K562 (cell line): ENCODE measurements at regions of chr16 and their contacts with region 1.

Region 1: GRCh38 chr16:23556881-23557778 is at the starts of genes EARS2 and UBFD1:
- DNase-seq: peak; percentile 95 to 99 (median 96)
- ATAC-seq: peak; percentile 96
- H3K4me3 ChIP-seq: peak within 1 kb of the TSS; percentile 97
- H3K27ac ChIP-seq: peak within 1 kb of the TSS; percentile 92
- H3K4me1 ChIP-seq: peaks cover 8 to 12% of the 10 kb centered on the region in 2 experiments; a peak in 3 of 5 replicates
- H3K27me3 ChIP-seq: no peaks in the 10 kb centered on the region
- CTCF ChIP-seq: peak; percentile 96 to 98 (median 98)
- EP300 ChIP-seq: peak; percentile 36; the same call in 1 of the 2 replicates
- POLR2A ChIP-seq: peak; percentile 88
- RAD21 ChIP-seq: peak; percentile 62 to 68
- polyA plus RNA-seq, gene EARS2: 17.6 to 20.4 TPM
- polyA plus RNA-seq, gene UBFD1: 10.7 to 11.0 TPM

Region 2: GRCh38 chr16:23435500-23435899 is 121.6 kb before region 1 on chr16:
- CTCF ChIA-PET with region 1: no interaction called
- POLR2A ChIA-PET with region 1: no interaction called
- in situ Hi-C with region 1: no loop called
- intact Hi-C with region 1: loop called (anchors 10 kb)
- DNase-seq: peak; percentile 65 to 80 (median 78)
- ATAC-seq: peak; percentile 97
- H3K4me3 ChIP-seq: no peak overlapping the region
- H3K27ac ChIP-seq: no peak overlapping the region
- H3K4me1 ChIP-seq: peaks cover 10 to 18% of the 10 kb centered on the region in 2 experiments; a peak in 4 of 5 replicates
- H3K27me3 ChIP-seq: no peaks in the 10 kb centered on the region
- CTCF ChIP-seq: peak; percentile 94 to 99 (median 95)
- EP300 ChIP-seq: no peak
- POLR2A ChIP-seq: no peak
- RAD21 ChIP-seq: peak in 1 of 2 experiments; percentile 58; a peak in 2 of 4 replicates

Region 3: DNA sequence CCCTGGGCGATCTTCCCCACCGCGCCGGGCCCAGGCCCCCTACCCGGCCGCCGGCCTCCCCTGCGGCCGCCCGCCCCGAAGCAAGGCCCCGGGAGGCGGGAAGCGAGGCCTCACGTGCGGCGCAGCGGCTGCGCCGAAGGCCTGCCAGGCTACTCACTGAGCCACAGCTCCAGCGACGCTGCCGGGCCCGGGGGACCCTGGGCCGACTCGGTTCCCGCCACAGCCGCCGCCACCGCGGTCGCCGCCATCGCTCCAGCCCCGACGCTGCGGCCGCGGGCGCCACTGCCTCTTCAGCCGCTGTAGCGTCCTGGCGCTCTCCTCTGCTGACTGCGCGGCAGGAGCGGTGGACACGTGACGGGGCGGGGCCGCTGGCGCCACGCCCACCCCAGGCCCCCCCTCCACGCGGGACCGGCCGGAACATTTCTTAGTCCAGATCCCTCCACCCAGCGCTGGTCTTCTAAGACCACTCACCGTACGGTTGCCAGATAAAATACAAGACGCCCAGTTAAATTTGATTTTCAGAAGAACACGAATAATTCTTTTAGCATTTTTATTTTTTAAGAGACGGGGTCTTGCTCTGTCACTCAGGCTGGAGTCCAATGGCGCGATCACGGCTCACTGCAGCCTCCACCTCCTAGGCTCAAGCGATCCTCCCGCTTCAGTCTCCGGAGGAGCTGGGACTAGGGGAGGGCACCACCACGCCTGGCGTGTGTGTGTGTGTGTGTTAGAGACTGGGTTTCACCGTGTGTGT is 46.8 kb before region 1 on chr16 and contains the start of gene GGA2:
- CTCF ChIA-PET with region 1: no interaction called
- POLR2A ChIA-PET with region 1: interaction called, 3 read pairs
- in situ Hi-C with region 1: no loop called
- intact Hi-C with region 1: loop called (anchors 2 kb)
- DNase-seq: peak; percentile 88 to 91 (median 90)
- ATAC-seq: peak; percentile 89
- H3K4me3 ChIP-seq: peak within 1 kb of the TSS; percentile 62
- H3K27ac ChIP-seq: peak within 1 kb of the TSS; percentile 83
- H3K4me1 ChIP-seq: peaks cover 34 to 41% of the 10 kb centered on the region in 2 experiments; a peak in 4 of 5 replicates
- H3K27me3 ChIP-seq: no peaks in the 10 kb centered on the region
- CTCF ChIP-seq: no peak
- EP300 ChIP-seq: no peak
- POLR2A ChIP-seq: peak; percentile 71
- RAD21 ChIP-seq: no peak
- polyA plus RNA-seq, gene GGA2: 11.9 to 15.7 TPM

Region 4: DNA sequence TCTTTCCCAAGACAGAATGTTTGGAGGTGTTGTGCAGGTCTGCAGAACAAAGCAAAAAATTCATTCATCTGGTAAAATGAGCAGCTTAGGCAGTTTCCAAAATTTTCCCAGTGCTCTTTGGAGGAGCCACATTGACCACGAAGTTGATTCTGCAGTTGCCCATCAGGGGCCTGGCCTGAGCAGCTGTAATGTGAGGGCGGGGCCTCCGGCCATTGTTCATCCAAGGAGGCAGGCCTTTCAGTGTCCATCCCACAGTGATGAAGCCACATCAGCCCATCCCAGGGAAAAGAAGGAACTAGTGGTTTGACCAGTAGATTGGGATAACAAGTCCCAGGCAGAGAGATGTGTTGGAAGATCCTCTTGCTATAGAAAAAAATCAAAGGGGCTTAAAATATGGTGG is 10.5 kb after region 1 on chr16:
- CTCF ChIA-PET with region 1: no interaction called
- POLR2A ChIA-PET with region 1: interaction called, 19 read pairs
- in situ Hi-C with region 1: no loop called
- intact Hi-C with region 1: no loop called
- DNase-seq: no peak
- ATAC-seq: peak; percentile 31; the same call in 1 of the 3 replicates
- H3K4me3 ChIP-seq: no peak overlapping the region
- H3K27ac ChIP-seq: no peak overlapping the region
- H3K4me1 ChIP-seq: no peaks in the 10 kb centered on the region
- H3K27me3 ChIP-seq: no peaks in the 10 kb centered on the region
- CTCF ChIP-seq: no peak
- EP300 ChIP-seq: no peak
- POLR2A ChIP-seq: no peak
- RAD21 ChIP-seq: no peak

Region 5: GRCh38 chr16:23597003-23597756 is 40.0 kb after region 1 on chr16:
- CTCF ChIA-PET with region 1: interaction called, 4 read pairs
- POLR2A ChIA-PET with region 1: interaction called, 9 read pairs
- in situ Hi-C with region 1: no loop called
- intact Hi-C with region 1: loop called (anchors 1 kb)
- DNase-seq: peak; percentile 54 to 90 (median 66)
- ATAC-seq: peak; percentile 89
- H3K4me3 ChIP-seq: no peak overlapping the region
- H3K27ac ChIP-seq: peak overlapping the region; percentile 86
- H3K4me1 ChIP-seq: peaks cover 12 to 18% of the 10 kb centered on the region in 2 experiments; a peak in 4 of 5 replicates
- H3K27me3 ChIP-seq: no peaks in the 10 kb centered on the region
- CTCF ChIP-seq: peak; percentile 78 to 86 (median 85)
- EP300 ChIP-seq: peak; percentile 49; the same call in 1 of the 2 replicates
- POLR2A ChIP-seq: peak; percentile 36; the same call in 1 of the 2 replicates
- RAD21 ChIP-seq: peak; percentile 43 to 68